CD8-positive, alpha-beta memory T cell (primary cell): ENCODE measurements at regions of chr11 and their contacts with region 1.

Region 1: GRCh38 chr11:114183044-114183511 is 113.1 kb upstream of the NNMT start:
- DNase-seq: peak; percentile 44 to 87 (median 70)
- H3K4me3 ChIP-seq: peak overlapping the region; percentile 21
- H3K4me3 Mint-ChIP-seq: peak overlapping the region; percentile 47 to 83 (median 71)
- H3K27ac ChIP-seq: peak overlapping the region; percentile 20
- H3K27ac Mint-ChIP-seq: peak overlapping the region; percentile 86 to 97 (median 96)
- H3K4me1 ChIP-seq: peaks cover 66% of the 10 kb centered on the region
- H3K4me1 Mint-ChIP-seq: peaks cover 84 to 94% (median 92%) of the 10 kb centered on the region in 3 donors
- H3K27me3 ChIP-seq: no peaks in the 10 kb centered on the region
- H3K27me3 Mint-ChIP-seq: peaks cover 0 to 3% of the 10 kb centered on the region in 2 donors

Region 2: DNA sequence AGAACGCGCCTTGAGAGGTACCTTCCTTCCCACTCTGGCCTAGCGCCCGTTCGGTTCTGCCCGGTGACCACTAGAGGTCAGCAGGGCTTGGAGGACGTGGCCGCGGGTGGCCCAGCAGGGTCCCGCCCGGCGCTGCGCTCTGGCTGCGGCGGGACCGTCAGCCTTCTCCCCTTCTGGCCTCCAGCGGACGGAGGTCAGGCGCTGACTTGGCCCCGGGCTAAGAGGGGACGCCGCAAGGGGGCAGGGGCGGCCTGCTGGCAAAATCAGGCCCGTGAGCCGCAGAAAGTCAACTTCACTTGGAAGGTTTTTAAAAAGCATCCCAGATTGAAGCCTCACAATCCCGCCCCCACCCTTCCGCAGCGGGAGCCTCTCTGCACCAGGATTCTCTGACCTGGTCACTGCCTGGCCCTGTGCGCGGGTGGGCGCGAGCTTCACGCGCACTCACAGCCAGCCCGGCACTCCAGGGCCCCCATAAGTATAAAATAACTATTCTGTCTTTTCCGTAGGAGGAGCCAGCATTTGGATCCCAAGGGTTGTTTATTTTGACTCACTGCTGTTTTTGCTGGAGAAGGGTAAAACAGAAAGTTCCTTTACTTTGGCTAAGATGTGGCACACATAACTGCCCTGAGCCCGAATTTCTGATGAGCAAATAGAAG is 146.8 kb before region 1 on chr11:
- CTCF ChIA-PET with region 1: interaction called, 11 read pairs
- POLR2A ChIA-PET with region 1: no interaction called
- DNase-seq: peak; percentile 19 to 57 (median 42)
- H3K4me3 ChIP-seq: no peak overlapping the region
- H3K4me3 Mint-ChIP-seq: peak overlapping the region in 1 of 7 donors; percentile 29
- H3K27ac ChIP-seq: no peak overlapping the region
- H3K27ac Mint-ChIP-seq: peak overlapping the region in 1 of 8 donors; percentile 47
- H3K4me1 ChIP-seq: peaks cover 10% of the 10 kb centered on the region
- H3K4me1 Mint-ChIP-seq: peaks cover 5 to 8% (median 7%) of the 10 kb centered on the region in 3 donors
- H3K27me3 ChIP-seq: no peaks in the 10 kb centered on the region
- H3K27me3 Mint-ChIP-seq: peaks cover 10 to 16% of the 10 kb centered on the region in 2 donors

Region 3: DNA sequence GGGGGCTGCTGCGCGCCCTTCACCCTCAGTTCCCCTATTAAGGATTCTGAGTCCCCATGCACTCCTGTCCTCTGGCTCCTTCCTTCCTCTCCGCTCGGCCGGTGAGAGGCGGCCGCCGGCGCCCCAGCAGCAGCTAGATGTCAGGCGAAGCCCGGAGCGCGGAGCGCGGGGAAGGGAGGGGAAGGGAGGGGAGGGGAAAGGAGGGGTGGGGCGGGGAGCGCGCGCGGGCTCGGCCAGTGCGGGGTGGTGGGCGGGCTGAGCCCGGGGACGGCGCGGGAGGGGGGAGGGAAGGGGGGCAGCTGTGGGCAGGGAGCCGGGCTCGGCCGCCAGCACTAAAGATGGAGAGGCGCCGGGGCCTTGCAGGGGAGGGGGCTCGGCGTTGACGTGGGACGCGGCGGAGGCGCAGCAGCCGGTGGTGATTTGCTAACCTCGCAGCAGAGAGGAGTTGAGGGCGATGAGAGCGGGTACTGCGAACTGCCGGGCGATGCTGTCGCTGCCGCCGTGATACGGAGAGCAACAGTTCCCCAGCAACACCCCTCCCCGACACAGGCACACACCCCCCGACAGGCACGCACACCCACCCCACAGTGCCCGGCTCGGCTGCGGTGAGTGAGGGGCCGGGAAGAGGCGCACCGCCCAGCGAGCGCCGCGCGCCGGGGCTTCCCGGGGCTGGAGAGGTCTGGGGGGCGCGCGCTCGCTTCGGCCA is 123.6 kb before region 1 on chr11 and contains the start of gene ZBTB16:
- CTCF ChIA-PET with region 1: interaction called, 11 read pairs
- POLR2A ChIA-PET with region 1: interaction called, 4 read pairs
- DNase-seq: peak; percentile 38 to 71 (median 68)
- H3K4me3 ChIP-seq: peak within 1 kb of the TSS; percentile 69
- H3K4me3 Mint-ChIP-seq: peak within 1 kb of the TSS; percentile 88 to 96 (median 95)
- H3K27ac ChIP-seq: peak within 1 kb of the TSS; percentile 43
- H3K27ac Mint-ChIP-seq: peak within 1 kb of the TSS; percentile 23 to 98 (median 92)
- H3K4me1 ChIP-seq: peaks cover 8% of the 10 kb centered on the region
- H3K4me1 Mint-ChIP-seq: peaks cover 14 to 24% (median 16%) of the 10 kb centered on the region in 3 donors
- H3K27me3 ChIP-seq: peaks cover 15% of the 10 kb centered on the region
- H3K27me3 Mint-ChIP-seq: peaks cover 18 to 24% of the 10 kb centered on the region in 2 donors
- total RNA-seq, gene ZBTB16: 2.1 to 2.2 TPM

Region 4: DNA sequence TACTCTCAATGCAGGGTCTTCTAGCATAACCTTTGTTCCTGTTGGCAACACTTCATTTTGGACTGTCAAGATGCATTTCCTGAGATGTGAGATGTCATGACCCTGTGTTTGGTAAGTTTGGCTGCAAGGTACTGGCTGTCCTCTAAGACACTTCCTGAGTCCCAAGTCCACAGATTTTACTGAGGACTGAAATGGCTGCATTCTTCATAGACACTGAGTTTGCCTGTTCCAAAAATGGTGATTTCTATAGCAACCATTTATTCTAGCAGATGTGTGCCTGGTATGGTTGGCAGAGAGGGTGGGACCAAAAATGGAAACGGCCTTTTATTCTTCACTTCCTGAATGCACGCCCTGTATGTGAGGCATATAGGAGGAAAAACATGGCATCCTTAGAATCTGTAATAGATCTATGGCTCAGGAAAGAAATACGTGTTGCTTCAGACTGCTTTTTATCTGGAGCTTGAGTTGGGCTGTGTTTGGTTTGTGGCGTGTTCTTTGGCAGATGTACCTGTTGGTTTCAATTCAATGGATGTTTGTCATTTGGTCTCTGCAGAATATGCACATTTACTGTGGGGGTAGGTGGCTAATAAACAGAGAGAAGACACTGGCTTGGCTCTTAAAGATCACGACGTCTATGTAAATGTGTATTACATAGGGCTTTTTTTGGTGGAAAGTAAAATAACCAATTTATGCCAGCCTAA is 61.1 kb before region 1 on chr11:
- CTCF ChIA-PET with region 1: no interaction called
- POLR2A ChIA-PET with region 1: no interaction called
- DNase-seq: no peak
- H3K4me3 ChIP-seq: no peak overlapping the region
- H3K4me3 Mint-ChIP-seq: peak overlapping the region in 1 of 7 donors; percentile 58
- H3K27ac ChIP-seq: no peak overlapping the region
- H3K27ac Mint-ChIP-seq: peak overlapping the region in 5 of 8 donors; percentile 13 to 91 (median 79)
- H3K4me1 ChIP-seq: no peaks in the 10 kb centered on the region
- H3K4me1 Mint-ChIP-seq: peaks cover 5 to 55% (median 47%) of the 10 kb centered on the region in 3 donors
- H3K27me3 ChIP-seq: no peaks in the 10 kb centered on the region
- H3K27me3 Mint-ChIP-seq: peaks cover 6 to 12% of the 10 kb centered on the region in 2 donors

Region 5: GRCh38 chr11:114159802-114160632 is 23.1 kb before region 1 on chr11:
- CTCF ChIA-PET with region 1: interaction called, 16 read pairs
- POLR2A ChIA-PET with region 1: interaction called, 5 read pairs
- DNase-seq: peak; percentile 91 to 99 (median 97)
- H3K4me3 ChIP-seq: peak overlapping the region; percentile 38
- H3K4me3 Mint-ChIP-seq: peak overlapping the region; percentile 69 to 89 (median 81)
- H3K27ac ChIP-seq: peak overlapping the region; percentile 7
- H3K27ac Mint-ChIP-seq: peak overlapping the region; percentile 81 to 97 (median 95)
- H3K4me1 ChIP-seq: peaks cover 56% of the 10 kb centered on the region
- H3K4me1 Mint-ChIP-seq: peaks cover 79 to 90% (median 87%) of the 10 kb centered on the region in 3 donors
- H3K27me3 ChIP-seq: no peaks in the 10 kb centered on the region
- H3K27me3 Mint-ChIP-seq: no peaks in the 10 kb centered on the region

Region 6: DNA sequence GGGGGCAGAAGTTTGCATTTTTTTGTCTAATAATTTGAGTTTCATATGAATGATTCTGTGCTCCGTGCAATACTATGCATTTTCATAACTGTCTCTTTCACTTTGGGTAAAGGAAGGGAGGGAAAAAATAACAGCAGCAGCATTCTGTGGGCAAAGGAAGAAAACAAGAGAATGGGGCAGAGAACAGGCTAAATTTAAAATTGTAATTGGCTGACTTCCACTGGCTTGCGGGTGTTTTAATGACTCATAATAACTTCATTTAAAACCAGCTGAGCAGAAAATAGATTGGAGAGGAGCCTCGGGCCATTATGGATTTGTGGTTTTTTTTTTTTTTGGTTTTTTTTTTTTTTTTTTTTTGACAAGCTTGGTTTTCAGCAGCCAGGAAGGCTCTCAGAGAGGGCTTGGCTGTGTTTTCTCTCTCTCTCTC is 16.2 kb before region 1 on chr11:
- CTCF ChIA-PET with region 1: interaction called, 10 read pairs
- POLR2A ChIA-PET with region 1: interaction called, 16 read pairs
- DNase-seq: peak in 3 of 5 donors; percentile 30 to 63 (median 54)
- H3K4me3 ChIP-seq: peak overlapping the region; percentile 19
- H3K4me3 Mint-ChIP-seq: peak overlapping the region; percentile 33 to 89 (median 57)
- H3K27ac ChIP-seq: no peak overlapping the region
- H3K27ac Mint-ChIP-seq: peak overlapping the region; percentile 43 to 91 (median 86)
- H3K4me1 ChIP-seq: peaks cover 79% of the 10 kb centered on the region
- H3K4me1 Mint-ChIP-seq: peaks cover 91 to 99% (median 94%) of the 10 kb centered on the region in 3 donors
- H3K27me3 ChIP-seq: no peaks in the 10 kb centered on the region
- H3K27me3 Mint-ChIP-seq: peaks cover 0 to 2% of the 10 kb centered on the region in 2 donors

Region 7: GRCh38 chr11:114195981-114196731 is 13.1 kb after region 1 on chr11:
- CTCF ChIA-PET with region 1: interaction called, 42 read pairs
- POLR2A ChIA-PET with region 1: interaction called, 11 read pairs
- DNase-seq: peak in 2 of 5 donors; percentile 32 to 53
- H3K4me3 ChIP-seq: no peak overlapping the region
- H3K4me3 Mint-ChIP-seq: no peak overlapping the region
- H3K27ac ChIP-seq: no peak overlapping the region
- H3K27ac Mint-ChIP-seq: peak overlapping the region in 7 of 8 donors; percentile 72 to 99 (median 94)
- H3K4me1 ChIP-seq: peaks cover 9% of the 10 kb centered on the region
- H3K4me1 Mint-ChIP-seq: peaks cover 22 to 35% (median 27%) of the 10 kb centered on the region in 3 donors
- H3K27me3 ChIP-seq: no peaks in the 10 kb centered on the region
- H3K27me3 Mint-ChIP-seq: peaks cover 0 to 1% of the 10 kb centered on the region in 2 donors